Breast epithelium (tissue), 4 donors: ENCODE measurements at regions of chr1 and their contacts with region 1.

Region 1: GRCh38 chr1:63487336-63488065 is 35.5 kb downstream of the ITGB3BP start:
- DNase-seq: no peak
- H3K4me3 ChIP-seq: no peak overlapping the region
- H3K27ac ChIP-seq: no peak overlapping the region
- H3K4me1 ChIP-seq: no peaks in the 10 kb centered on the region
- H3K27me3 ChIP-seq: no peaks in the 10 kb centered on the region
- CTCF ChIP-seq: no peak
- POLR2A ChIP-seq: no peak

Region 2: DNA sequence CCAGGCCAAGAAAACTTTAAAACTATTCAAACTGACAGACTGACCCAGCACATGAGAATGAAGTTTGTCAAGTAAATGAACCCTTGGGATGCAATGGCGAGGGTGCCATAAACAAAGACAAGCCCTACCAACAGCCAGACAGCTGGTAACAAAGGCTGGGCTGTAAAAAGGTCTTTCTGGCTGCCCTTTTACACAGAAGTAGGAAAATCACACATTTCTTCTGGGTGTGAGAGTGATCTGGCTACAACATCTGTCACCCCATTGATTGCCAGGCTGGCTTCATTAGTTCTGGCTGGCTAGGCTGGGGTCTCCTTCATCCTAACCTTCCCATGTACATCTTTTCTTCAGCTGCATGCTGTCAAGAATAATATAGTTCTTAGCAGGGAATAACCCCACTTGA is 248.8 kb before region 1 on chr1:
- intact Hi-C with region 1: no loop called
- DNase-seq: no peak
- H3K4me3 ChIP-seq: no peak overlapping the region
- H3K27ac ChIP-seq: no peak overlapping the region
- H3K4me1 ChIP-seq: no peaks in the 10 kb centered on the region
- H3K27me3 ChIP-seq: no peaks in the 10 kb centered on the region
- CTCF ChIP-seq: no peak
- POLR2A ChIP-seq: no peak

Region 3: GRCh38 chr1:64231153-64231552 is 743.7 kb after region 1 on chr1:
- intact Hi-C with region 1: loop called (anchors 10 kb)
- DNase-seq: no peak
- H3K4me3 ChIP-seq: no peak overlapping the region
- H3K27ac ChIP-seq: no peak overlapping the region
- H3K4me1 ChIP-seq: no peaks in the 10 kb centered on the region
- H3K27me3 ChIP-seq: no peaks in the 10 kb centered on the region
- CTCF ChIP-seq: no peak
- POLR2A ChIP-seq: no peak